ENCODE measurements at regions of chr1 and their contacts with region 1.

Region 1: DNA sequence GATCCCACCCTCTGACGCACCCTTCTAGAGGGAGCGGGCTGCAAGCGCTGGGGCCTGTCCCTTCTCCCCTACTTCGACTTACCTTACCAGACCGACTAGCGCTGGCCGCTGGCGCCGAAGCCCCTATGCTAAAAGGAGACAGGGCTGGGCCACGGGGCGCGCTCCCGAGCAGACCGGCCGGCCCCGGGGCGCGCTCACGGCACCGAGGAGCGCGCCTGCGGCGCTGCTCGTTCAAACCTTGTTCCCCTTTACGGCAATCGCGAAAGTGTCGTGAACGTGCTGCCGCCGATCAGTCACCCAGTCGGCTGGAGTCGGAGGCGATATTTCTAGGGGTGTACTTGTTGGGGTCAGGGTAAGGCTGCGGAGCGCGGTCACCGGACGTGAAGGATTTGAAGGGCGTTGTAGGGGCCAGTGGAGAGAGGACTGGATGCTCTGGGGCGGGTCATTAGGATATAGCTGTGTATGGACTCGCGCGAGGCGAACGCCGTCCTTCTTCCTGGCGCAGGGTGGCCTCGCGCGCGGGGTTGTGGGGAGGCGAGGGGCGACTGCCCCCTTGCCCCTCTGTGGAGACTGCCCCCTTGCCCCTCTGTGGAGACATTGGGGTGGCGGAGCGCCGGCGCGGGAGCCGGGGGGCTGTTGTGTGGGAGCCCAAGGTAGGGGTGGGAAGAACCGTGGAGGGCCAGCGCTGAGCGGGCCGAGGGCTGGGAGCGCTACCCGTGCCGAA is at the starts of genes CEPT1 and DRAM2:
- DNase-seq: peak; percentile 98
- ATAC-seq: peak; percentile 78
- H3K4me3 Mint-ChIP-seq: peak within 1 kb of the TSS; percentile 95
- H3K27ac Mint-ChIP-seq: peak within 1 kb of the TSS; percentile 99
- H3K4me1 Mint-ChIP-seq: peaks cover 53% of the 10 kb centered on the region
- H3K27me3 Mint-ChIP-seq: no peaks in the 10 kb centered on the region
- total RNA-seq, gene CEPT1: 34.7 to 49.1 TPM
- total RNA-seq, gene DRAM2: 30.4 to 34.4 TPM

Region 2: DNA sequence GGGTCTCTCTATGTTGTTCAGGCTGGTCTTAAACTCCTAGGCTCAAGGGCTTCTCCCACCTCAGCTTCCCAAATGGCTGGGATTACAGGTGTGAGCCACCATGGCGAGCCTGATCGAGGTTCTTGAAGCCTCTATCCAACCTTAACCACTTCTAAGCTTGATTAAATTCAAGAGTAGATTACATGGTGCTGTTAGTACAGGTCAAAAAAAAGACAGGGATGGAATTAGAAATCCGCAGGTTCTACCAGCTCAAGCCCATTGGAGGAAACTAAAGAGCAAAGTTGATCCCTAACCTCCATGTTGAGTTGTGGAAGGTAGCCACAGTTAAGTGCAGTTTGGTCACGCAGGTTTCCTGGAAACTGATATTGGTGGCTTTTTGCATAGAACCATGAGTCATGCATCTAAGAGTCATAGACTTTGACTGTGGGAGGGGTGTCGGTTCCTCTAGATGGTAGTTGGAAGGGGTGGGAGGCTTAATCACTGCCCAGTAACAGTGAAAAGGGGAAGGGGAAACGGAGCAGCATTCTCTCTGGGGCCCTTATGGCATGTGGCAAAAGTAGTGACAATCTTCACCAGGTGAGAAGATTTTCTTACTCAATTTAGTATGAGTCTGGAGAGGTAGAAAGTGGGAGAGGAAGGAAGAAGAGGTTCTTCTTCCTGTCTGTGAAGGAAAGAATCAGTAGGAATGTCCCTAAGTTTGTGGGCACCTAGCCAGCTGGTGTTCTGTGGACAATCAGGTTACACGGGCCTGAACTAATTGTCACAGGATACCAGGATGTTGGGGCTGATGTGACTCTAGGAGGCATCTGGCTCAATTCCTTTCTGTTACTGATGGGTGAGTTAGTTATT is 260.1 kb before region 1 on chr1:
- CTCF ChIA-PET with region 1: no interaction called
- POLR2A ChIA-PET with region 1: no interaction called
- intact Hi-C with region 1: loop called in 1 of 2 experiments (anchors 2 kb)
- DNase-seq: peak; percentile 77
- ATAC-seq: peak; percentile 66
- H3K4me3 Mint-ChIP-seq: peak overlapping the region; percentile 85
- H3K27ac Mint-ChIP-seq: peak overlapping the region; percentile 100
- H3K4me1 Mint-ChIP-seq: peaks cover 63% of the 10 kb centered on the region
- H3K27me3 Mint-ChIP-seq: no peaks in the 10 kb centered on the region

Region 3: GRCh38 chr1:111183308-111184069 is 43.4 kb after region 1 on chr1:
- CTCF ChIA-PET with region 1: no interaction called
- POLR2A ChIA-PET with region 1: no interaction called
- intact Hi-C with region 1: loop called (anchors 5 kb)
- DNase-seq: no peak
- ATAC-seq: peak; percentile 14
- H3K4me3 Mint-ChIP-seq: no peak overlapping the region
- H3K27ac Mint-ChIP-seq: peak overlapping the region; percentile 48
- H3K4me1 Mint-ChIP-seq: peaks cover 76% of the 10 kb centered on the region
- H3K27me3 Mint-ChIP-seq: no peaks in the 10 kb centered on the region

Region 4: DNA sequence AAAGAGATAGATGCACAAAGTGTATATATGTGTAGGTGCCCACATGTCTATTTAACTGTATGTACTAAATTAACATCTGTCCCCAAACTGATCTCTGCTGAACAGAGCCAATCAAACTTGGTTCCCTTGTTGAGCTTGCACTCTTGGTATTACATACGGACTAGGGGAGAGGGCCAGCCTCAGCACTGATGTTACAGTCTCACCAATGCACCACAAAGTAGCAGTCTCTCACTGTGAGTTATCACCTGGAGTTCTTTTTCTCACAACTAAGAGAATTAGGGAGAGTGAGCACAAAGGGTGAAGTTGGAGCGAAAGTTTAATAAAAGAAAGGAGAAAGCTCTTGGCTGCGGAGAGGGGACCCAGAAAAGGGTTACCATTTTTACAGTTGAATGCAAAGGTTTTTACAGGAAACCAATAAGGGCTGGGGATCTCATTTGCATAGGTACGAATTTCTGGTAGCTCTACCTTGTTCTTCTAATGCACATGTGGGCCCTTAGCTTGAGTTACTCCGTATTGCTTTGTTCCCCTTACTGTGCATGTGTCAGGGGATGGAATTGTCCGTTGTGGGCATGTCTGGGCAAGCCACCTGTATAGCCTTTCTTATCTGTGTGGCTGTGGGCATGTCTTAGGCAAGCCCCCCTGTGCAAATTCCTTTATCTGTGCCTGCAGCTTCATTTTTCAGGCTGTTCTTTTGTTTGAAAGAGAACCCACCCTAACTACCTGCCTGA is 74.1 kb after region 1 on chr1:
- CTCF ChIA-PET with region 1: no interaction called
- POLR2A ChIA-PET with region 1: interaction called, 3 read pairs
- intact Hi-C with region 1: loop called in 1 of 2 experiments (anchors 1 kb)
- DNase-seq: no peak
- ATAC-seq: peak; percentile 18
- H3K4me3 Mint-ChIP-seq: peak overlapping the region; percentile 68
- H3K27ac Mint-ChIP-seq: peak overlapping the region; percentile 97
- H3K4me1 Mint-ChIP-seq: peaks cover 80% of the 10 kb centered on the region
- H3K27me3 Mint-ChIP-seq: no peaks in the 10 kb centered on the region

Region 5: GRCh38 chr1:111251570-111251969 is 111.5 kb after region 1 on chr1:
- CTCF ChIA-PET with region 1: no interaction called
- POLR2A ChIA-PET with region 1: no interaction called
- intact Hi-C with region 1: no loop called
- DNase-seq: no peak
- ATAC-seq: peak; percentile 58
- H3K4me3 Mint-ChIP-seq: no peak overlapping the region
- H3K27ac Mint-ChIP-seq: peak overlapping the region; percentile 23
- H3K4me1 Mint-ChIP-seq: peaks cover 16% of the 10 kb centered on the region
- H3K27me3 Mint-ChIP-seq: no peaks in the 10 kb centered on the region

Region 6: DNA sequence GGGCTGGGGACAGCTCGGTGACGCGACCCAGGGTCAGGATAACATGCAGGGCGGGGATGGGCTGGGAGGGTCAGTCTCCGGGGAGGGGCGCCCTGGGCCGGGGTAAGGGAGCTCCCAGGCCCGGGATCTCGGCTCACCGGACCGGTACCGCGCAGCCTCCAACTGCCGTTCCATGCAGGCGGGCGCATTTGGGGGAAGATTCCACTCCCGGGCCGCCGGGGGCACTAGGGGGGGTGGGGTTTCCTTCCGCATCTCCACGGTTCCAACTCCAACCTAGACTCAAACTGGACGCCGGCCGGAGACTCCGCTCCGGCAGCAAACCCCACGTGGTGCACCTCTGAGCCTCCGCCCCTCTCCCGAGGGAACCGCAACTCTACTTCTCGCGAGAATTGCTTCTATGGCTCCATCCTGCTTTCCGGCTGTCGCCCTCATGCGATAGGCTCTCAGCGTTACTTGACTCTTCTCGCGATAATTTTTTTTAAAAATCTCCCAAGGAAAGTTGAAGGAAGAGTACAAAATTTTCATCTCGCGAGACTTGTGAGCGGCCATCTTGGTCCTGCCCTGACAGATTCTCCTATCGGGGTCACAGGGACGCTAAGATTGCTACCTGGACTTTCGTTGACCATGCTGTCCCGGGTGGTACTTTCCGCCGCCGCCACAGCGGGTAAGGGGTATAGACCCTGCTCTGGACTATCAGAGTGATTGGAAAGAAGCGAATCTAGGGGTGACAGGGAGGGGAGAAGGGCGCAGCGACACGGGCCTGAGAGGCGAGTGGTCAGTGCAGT is 309.0 kb after region 1 on chr1 and contains the starts of genes ATP5PB and WDR77:
- CTCF ChIA-PET with region 1: interaction called, 3 read pairs
- POLR2A ChIA-PET with region 1: no interaction called
- intact Hi-C with region 1: loop called (anchors 1 to 2 kb)
- DNase-seq: peak; percentile 94
- ATAC-seq: peak; percentile 98
- H3K4me3 Mint-ChIP-seq: peak within 1 kb of the TSS; percentile 99
- H3K27ac Mint-ChIP-seq: peak within 1 kb of the TSS; percentile 98
- H3K4me1 Mint-ChIP-seq: peaks cover 79% of the 10 kb centered on the region
- H3K27me3 Mint-ChIP-seq: no peaks in the 10 kb centered on the region
- total RNA-seq, gene ATP5PB: 292 to 301 TPM
- total RNA-seq, gene WDR77: 42.5 to 53.6 TPM

Region 7: DNA sequence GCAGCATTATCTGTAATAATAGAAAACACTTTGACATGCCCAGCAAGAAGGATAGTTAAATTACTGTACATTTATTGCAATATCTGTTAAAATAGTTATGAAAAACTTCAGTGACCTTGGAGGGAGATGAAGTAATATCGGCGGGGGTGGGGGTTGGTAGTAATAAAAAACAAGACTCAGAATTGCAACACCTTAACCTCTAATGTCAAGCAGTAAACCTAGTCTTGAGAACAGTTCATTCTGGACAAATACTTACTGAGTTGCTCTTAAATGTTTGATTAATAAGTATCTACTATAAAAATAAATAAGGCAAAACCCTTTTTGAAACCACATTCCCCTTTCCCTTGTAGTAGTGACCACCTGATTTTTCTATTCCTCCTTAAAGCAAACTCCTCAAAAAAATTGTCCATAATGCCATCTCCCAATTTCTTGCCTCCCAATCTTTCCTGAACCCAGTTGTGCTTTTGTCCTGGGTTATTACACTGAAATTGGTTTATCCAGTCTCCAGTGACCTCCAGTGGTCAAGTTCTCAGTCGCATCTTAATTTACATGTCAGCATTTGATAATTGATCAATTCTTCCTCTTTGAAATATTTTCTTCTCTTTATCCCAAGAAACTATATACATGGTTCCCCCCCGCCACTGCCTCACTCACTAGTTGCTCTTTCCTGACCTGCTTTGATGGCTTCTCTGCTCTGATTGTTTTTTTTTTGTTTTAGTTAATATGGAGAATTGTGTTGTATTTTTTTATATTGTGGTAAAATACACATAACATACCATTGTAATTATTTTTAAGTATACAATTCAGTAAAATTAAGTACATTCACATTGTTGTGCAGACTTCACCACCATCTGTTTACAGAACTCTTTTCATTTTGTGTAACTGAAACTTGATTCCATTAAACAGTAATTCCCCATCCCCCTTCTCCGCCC is 516.2 kb after region 1 on chr1:
- CTCF ChIA-PET with region 1: no interaction called
- POLR2A ChIA-PET with region 1: no interaction called
- intact Hi-C with region 1: loop called in 1 of 2 experiments (anchors 5 kb)
- DNase-seq: peak; percentile 28
- ATAC-seq: no peak
- H3K4me3 Mint-ChIP-seq: no peak overlapping the region
- H3K27ac Mint-ChIP-seq: peak overlapping the region; percentile 52
- H3K4me1 Mint-ChIP-seq: peaks cover 49% of the 10 kb centered on the region
- H3K27me3 Mint-ChIP-seq: no peaks in the 10 kb centered on the region

Measured in activated CD4-positive, alpha-beta T cell treated with anti-CD3 and anti-CD28 coated beads for 36 hours (primary cell).